ENCODE measurements at regions of chr22 and their contacts with region 1.

Region 1: GRCh38 chr22:20268279-20269012 is at the start of gene RTN4R:
- DNase-seq: peak; percentile 22 to 81 (median 52)
- ATAC-seq: peak; percentile 87
- H3K4me3 ChIP-seq: peak within 1 kb of the TSS; percentile 26
- H3K4me3 Mint-ChIP-seq: peak within 1 kb of the TSS; percentile 82
- H3K27ac ChIP-seq: no peak within 1 kb of the TSS
- H3K27ac Mint-ChIP-seq: no peak within 1 kb of the TSS
- H3K4me1 ChIP-seq: peaks cover 16% of the 10 kb centered on the region
- H3K4me1 Mint-ChIP-seq: peaks cover 5% of the 10 kb centered on the region
- H3K27me3 ChIP-seq: no peaks in the 10 kb centered on the region
- H3K27me3 Mint-ChIP-seq: no peaks in the 10 kb centered on the region
- CTCF ChIP-seq: peak; percentile 50
- total RNA-seq, gene RTN4R: 0.36 to 0.50 TPM

Region 2: GRCh38 chr22:19800761-19801244 is 467.6 kb before region 1 on chr22:
- CTCF ChIA-PET with region 1: no interaction called
- POLR2A ChIA-PET with region 1: no interaction called
- intact Hi-C with region 1: no loop called
- DNase-seq: no peak
- ATAC-seq: no peak
- H3K4me3 ChIP-seq: no peak overlapping the region
- H3K4me3 Mint-ChIP-seq: no peak overlapping the region
- H3K27ac ChIP-seq: no peak overlapping the region
- H3K27ac Mint-ChIP-seq: no peak overlapping the region
- H3K4me1 ChIP-seq: no peaks in the 10 kb centered on the region
- H3K4me1 Mint-ChIP-seq: peaks cover 4% of the 10 kb centered on the region
- H3K27me3 ChIP-seq: no peaks in the 10 kb centered on the region
- H3K27me3 Mint-ChIP-seq: no peaks in the 10 kb centered on the region
- CTCF ChIP-seq: no peak

Region 3: DNA sequence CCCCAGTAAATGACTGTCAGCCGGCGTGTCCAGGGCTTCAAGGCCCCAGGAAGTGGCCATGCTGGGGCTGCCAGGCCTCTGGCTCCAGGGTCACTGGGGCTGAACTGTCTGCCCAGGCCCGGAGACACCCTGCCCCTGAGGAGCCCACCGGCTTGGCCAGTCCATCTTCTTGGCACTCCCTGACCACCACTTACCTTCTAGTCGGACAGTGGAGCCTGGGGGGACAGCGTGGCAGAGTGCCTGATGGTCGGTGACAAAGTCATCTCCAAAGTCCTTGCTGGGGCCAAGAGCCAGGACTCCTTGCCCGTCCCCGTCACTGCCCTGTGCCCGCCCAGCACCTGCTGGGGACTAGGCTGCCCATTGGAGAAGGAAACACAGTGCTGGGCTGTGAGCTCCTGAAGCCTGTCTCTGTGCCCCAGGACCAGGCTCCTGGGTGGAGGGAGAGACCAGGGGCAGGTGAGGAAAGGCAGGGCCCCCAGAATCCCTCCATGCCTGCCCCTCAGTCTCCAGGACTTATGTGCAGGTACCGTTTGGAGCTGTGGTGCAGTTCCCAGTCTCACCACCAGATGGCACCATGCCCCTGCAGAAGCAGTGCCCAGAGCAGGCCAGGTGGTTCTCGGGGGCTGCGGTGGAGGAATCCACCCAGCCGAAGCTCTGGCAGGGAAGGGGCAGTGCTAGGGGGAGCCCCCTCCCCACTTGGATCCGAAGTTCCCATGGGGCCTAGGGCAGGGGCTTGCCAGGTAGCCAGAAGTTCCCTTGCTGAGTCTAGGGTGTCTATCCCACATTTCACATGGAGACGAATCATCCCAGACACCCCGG is 111.6 kb before region 1 on chr22:
- CTCF ChIA-PET with region 1: no interaction called
- POLR2A ChIA-PET with region 1: no interaction called
- intact Hi-C with region 1: loop called (anchors 1 kb)
- DNase-seq: peak; percentile 75 to 96 (median 86)
- ATAC-seq: peak; percentile 95
- H3K4me3 ChIP-seq: no peak overlapping the region
- H3K4me3 Mint-ChIP-seq: no peak overlapping the region
- H3K27ac ChIP-seq: no peak overlapping the region
- H3K27ac Mint-ChIP-seq: no peak overlapping the region
- H3K4me1 ChIP-seq: peaks cover 21% of the 10 kb centered on the region
- H3K4me1 Mint-ChIP-seq: peaks cover 4% of the 10 kb centered on the region
- H3K27me3 ChIP-seq: peaks cover 4 to 6% of the 10 kb centered on the region in 2 experiments
- H3K27me3 Mint-ChIP-seq: peaks cover 5% of the 10 kb centered on the region
- CTCF ChIP-seq: peak; percentile 99

Region 4: DNA sequence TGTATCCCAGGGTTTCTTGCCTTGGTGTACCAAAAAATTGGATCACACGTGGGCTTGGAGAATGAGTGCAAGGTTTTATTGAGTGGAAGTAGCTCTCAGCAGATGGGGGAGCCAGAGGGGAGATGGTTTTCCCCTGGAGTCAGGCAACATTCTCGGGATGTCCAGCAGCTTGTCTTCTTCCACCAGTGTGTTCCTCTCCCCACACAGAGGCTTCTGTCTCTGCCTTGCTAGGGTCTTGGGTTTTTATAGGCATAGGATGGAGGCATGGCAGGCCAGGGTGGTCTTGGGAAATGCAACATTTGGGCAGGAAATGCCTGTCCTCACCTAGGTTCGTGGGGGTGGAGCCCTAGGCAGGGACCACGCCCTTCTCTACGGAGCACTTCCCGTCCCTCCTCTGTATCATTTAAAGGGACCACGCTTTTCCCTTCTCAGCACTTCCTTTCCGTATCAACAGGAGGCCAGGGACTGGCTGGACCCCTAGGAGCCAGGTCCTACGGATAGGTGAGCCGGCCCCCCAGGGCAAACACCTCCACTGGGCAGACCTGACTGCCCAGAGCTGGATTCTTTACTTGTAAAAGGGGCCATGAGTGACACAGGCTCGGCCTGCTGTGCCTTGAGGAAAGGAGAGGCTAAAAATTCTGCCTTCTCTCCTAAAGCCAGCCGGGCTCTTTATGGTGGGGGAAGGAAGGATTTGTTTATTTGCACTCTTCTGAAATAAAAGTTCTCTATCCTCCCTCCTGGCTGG is 62.3 kb before region 1 on chr22:
- CTCF ChIA-PET with region 1: no interaction called
- POLR2A ChIA-PET with region 1: no interaction called
- intact Hi-C with region 1: loop called in 1 of 2 experiments (anchors 5 kb)
- DNase-seq: peak; percentile 38 to 86 (median 66)
- ATAC-seq: peak; percentile 97
- H3K4me3 ChIP-seq: peak overlapping the region; percentile 75
- H3K4me3 Mint-ChIP-seq: peak overlapping the region; percentile 97
- H3K27ac ChIP-seq: peak overlapping the region; percentile 70 to 73
- H3K27ac Mint-ChIP-seq: peak overlapping the region; percentile 90
- H3K4me1 ChIP-seq: peaks cover 40% of the 10 kb centered on the region
- H3K4me1 Mint-ChIP-seq: peaks cover 27% of the 10 kb centered on the region
- H3K27me3 ChIP-seq: no peaks in the 10 kb centered on the region
- H3K27me3 Mint-ChIP-seq: no peaks in the 10 kb centered on the region
- CTCF ChIP-seq: no peak